WTC11 (cell line): ENCODE measurements at regions of chr21 and their contacts with region 1.

Region 1: GRCh38 chr21:36692835-36693488 is 6.0 kb upstream of the SIM2 start:
- DNase-seq: peak; percentile 67
- ATAC-seq: peak; percentile 17
- H3K4me3 Mint-ChIP-seq: peak overlapping the region; percentile 52
- H3K27ac Mint-ChIP-seq: no peak overlapping the region
- H3K4me1 Mint-ChIP-seq: peaks cover 51% of the 10 kb centered on the region
- H3K27me3 Mint-ChIP-seq: peaks cover 98% of the 10 kb centered on the region
- CTCF ChIP-seq: peak; percentile 54

Region 2: GRCh38 chr21:36640721-36641244 is 52.2 kb before region 1 on chr21:
- CTCF ChIA-PET with region 1: interaction called, 10 read pairs
- POLR2A ChIA-PET with region 1: no interaction called
- DNase-seq: no peak
- ATAC-seq: peak; percentile 59; the same call in 1 of the 2 replicates
- H3K4me3 Mint-ChIP-seq: no peak overlapping the region
- H3K27ac Mint-ChIP-seq: no peak overlapping the region
- H3K4me1 Mint-ChIP-seq: peaks cover 11% of the 10 kb centered on the region
- H3K27me3 Mint-ChIP-seq: no peaks in the 10 kb centered on the region
- CTCF ChIP-seq: no peak

Region 3: DNA sequence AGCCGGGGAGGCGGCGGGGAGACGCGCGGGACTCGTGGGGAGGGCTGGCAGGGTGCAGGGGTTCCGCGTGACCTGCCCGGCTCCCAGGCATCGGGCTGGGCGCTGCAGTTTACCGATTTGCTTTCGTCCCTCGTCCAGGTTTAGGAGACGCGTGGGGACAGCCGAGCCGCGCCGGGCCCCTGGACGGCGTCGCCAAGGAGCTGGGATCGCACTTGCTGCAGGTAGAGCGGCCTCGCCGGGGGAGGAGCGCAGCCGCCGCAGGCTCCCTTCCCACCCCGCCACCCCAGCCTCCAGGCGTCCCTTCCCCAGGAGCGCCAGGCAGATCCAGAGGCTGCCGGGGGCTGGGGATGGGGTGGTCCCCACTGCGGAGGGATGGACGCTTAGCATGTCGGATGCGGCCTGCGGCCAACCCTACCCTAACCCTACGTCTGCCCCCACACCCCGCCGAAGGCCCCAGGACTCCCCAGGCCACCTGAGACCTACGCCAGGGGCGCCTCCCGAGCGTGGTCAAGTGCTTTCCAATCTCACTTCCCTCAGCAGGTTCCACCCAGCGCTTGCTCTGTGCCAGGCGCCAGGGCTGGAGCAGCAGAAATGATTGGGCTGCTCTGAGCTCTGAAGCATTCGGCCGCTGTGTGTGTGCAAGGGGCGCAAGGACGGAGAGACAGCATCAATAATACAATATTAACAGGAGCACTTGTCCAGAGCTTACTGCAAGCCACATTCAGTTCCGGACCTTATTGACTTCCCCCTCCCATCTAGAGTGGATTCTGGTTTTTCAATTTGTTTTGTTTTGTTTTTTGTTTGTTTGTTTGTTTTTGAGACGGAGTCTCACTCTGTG is 16.3 kb after region 1 on chr21:
- CTCF ChIA-PET with region 1: interaction called, 14 read pairs
- POLR2A ChIA-PET with region 1: interaction called, 3 read pairs
- DNase-seq: peak; percentile 36
- ATAC-seq: peak; percentile 2; the same call in 1 of the 2 replicates
- H3K4me3 Mint-ChIP-seq: peak overlapping the region; percentile 69
- H3K27ac Mint-ChIP-seq: no peak overlapping the region
- H3K4me1 Mint-ChIP-seq: peaks cover 55% of the 10 kb centered on the region
- H3K27me3 Mint-ChIP-seq: peaks cover 100% of the 10 kb centered on the region
- CTCF ChIP-seq: no peak

Region 4: DNA sequence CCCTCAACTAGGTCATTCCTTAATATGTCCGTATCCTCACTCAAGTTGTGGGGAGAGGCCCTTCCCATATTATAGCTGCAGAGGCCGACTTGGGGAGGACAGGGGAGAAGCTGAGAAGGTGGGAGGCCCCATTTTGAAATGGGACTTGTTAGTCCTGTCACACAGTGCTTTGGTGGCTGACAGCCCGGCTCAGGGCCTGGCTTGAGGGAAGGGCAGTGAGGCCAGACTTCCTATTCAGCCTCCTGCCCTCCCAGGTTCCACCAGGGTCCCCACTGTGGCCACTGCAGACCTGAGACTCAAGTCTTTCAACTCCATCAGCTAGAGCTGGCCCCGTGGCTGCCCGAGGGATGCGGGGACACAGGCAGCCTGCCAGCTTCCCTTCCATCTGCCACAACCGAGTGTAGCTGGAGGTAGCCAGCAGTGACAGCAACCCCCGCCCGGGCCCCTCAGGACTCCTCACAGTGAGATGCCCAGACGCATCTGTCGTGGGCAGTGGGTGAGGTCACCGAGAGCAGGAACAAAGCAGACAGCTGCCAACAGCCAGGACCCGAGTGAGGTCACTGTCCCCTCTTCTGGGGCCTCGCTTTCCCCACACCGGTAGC is 42.9 kb after region 1 on chr21:
- CTCF ChIA-PET with region 1: no interaction called
- POLR2A ChIA-PET with region 1: no interaction called
- DNase-seq: no peak
- ATAC-seq: no peak
- H3K4me3 Mint-ChIP-seq: no peak overlapping the region
- H3K27ac Mint-ChIP-seq: no peak overlapping the region
- H3K4me1 Mint-ChIP-seq: peaks cover 10% of the 10 kb centered on the region
- H3K27me3 Mint-ChIP-seq: no peaks in the 10 kb centered on the region; the same call in none of the 2 replicates
- CTCF ChIP-seq: no peak

Region 5: GRCh38 chr21:36747815-36748383 is 54.9 kb after region 1 on chr21:
- CTCF ChIA-PET with region 1: no interaction called
- POLR2A ChIA-PET with region 1: no interaction called
- DNase-seq: peak; percentile 82
- ATAC-seq: peak; percentile 61
- H3K4me3 Mint-ChIP-seq: peak overlapping the region; percentile 70
- H3K27ac Mint-ChIP-seq: no peak overlapping the region
- H3K4me1 Mint-ChIP-seq: peaks cover 52% of the 10 kb centered on the region
- H3K27me3 Mint-ChIP-seq: peaks cover 37% of the 10 kb centered on the region
- CTCF ChIP-seq: no peak